Mammary epithelial cell (primary cell): ENCODE measurements at regions of chr7 and their contacts with region 1.

Region 1: DNA sequence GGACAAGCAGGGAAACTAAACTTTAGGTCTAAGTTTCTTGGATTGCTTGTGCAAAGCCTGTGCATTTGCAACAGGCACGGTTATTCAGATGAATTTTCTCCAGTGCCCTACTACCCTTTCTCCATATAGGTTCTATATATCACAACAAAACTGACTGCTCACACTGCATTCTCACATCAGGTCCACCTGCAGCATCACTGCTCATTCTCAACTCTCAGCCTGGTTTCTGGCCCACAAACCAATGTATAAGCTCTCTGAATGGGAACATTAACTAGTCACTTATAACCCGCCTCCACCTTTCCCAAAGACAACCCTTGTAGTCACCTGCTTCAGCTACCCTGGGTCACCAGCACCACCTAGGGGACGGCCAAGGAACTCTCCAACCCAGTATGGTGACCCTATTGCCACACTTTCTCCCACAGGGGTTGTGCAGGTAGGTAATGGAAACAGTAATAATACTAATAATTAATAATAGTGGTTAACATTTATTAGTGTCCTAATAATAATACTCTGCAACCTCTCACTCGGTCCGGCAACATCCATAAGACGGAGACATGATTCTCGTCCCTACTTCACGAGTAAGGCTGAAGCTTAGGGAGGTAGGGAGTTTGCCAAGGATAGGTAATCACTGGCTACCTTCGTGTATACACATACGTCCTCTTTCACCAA is 97.3 kb downstream of the CLEC2L start:
- DNase-seq: peak; percentile 40
- H3K4me3 ChIP-seq: no peak overlapping the region
- H3K27ac ChIP-seq: no peak overlapping the region
- H3K4me1 ChIP-seq: no peaks in the 10 kb centered on the region
- H3K27me3 ChIP-seq: no peaks in the 10 kb centered on the region
- CTCF ChIP-seq: peak; percentile 78 to 81

Region 2: GRCh38 chr7:139431010-139431409 is 189.8 kb before region 1 on chr7:
- CTCF ChIA-PET with region 1: no interaction called
- dilution Hi-C with region 1: no loop called
- in situ Hi-C with region 1: no loop called
- intact Hi-C with region 1: loop called (anchors 10 kb)
- DNase-seq: peak; percentile 89
- H3K4me3 ChIP-seq: no peak overlapping the region
- H3K27ac ChIP-seq: no peak overlapping the region
- H3K4me1 ChIP-seq: peaks cover 14% of the 10 kb centered on the region
- H3K27me3 ChIP-seq: no peaks in the 10 kb centered on the region
- CTCF ChIP-seq: no peak

Region 3: GRCh38 chr7:139505563-139505962 is 115.2 kb before region 1 on chr7:
- CTCF ChIA-PET with region 1: no interaction called
- dilution Hi-C with region 1: no loop called
- in situ Hi-C with region 1: no loop called
- intact Hi-C with region 1: loop called (anchors 10 kb)
- DNase-seq: no peak
- H3K4me3 ChIP-seq: no peak overlapping the region
- H3K27ac ChIP-seq: no peak overlapping the region
- H3K4me1 ChIP-seq: no peaks in the 10 kb centered on the region
- H3K27me3 ChIP-seq: no peaks in the 10 kb centered on the region
- CTCF ChIP-seq: peak; percentile 19 to 29

Region 4: GRCh38 chr7:139825666-139826290 is 205.0 kb after region 1 on chr7:
- CTCF ChIA-PET with region 1: no interaction called
- dilution Hi-C with region 1: no loop called
- in situ Hi-C with region 1: no loop called
- intact Hi-C with region 1: loop called (anchors 2 kb)
- DNase-seq: peak; percentile 49
- H3K4me3 ChIP-seq: no peak overlapping the region
- H3K27ac ChIP-seq: no peak overlapping the region
- H3K4me1 ChIP-seq: peaks cover 8% of the 10 kb centered on the region
- H3K27me3 ChIP-seq: no peaks in the 10 kb centered on the region
- CTCF ChIP-seq: no peak

Region 5: DNA sequence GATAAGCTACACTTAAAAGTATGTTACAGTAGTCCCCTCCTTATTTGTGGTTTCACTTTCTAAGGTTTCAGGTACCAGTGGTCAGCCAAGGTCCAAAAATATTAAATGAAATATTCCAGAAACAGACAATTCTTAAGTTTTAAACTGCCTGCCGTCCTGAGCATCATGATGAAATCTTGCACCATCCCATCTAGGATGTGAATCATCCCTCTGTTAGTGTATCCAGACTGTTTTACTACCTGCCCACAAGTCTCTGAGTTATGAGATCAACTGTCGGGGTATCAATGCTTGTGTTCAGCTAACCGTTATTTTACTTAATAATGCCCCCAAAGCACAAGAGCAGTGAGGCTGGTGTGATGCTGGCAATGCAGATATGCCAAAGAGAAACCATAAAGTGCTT is 544.6 kb after region 1 on chr7:
- CTCF ChIA-PET with region 1: no interaction called
- dilution Hi-C with region 1: no loop called
- in situ Hi-C with region 1: no loop called
- intact Hi-C with region 1: no loop called
- DNase-seq: peak; percentile 74
- H3K4me3 ChIP-seq: no peak overlapping the region
- H3K27ac ChIP-seq: peak overlapping the region; percentile 85
- H3K4me1 ChIP-seq: peaks cover 24% of the 10 kb centered on the region
- H3K27me3 ChIP-seq: no peaks in the 10 kb centered on the region
- CTCF ChIP-seq: no peak